Right ventricle myocardium inferior (tissue), 1 donor: ENCODE measurements at regions of chr21 and their contacts with region 1.

Region 1: DNA sequence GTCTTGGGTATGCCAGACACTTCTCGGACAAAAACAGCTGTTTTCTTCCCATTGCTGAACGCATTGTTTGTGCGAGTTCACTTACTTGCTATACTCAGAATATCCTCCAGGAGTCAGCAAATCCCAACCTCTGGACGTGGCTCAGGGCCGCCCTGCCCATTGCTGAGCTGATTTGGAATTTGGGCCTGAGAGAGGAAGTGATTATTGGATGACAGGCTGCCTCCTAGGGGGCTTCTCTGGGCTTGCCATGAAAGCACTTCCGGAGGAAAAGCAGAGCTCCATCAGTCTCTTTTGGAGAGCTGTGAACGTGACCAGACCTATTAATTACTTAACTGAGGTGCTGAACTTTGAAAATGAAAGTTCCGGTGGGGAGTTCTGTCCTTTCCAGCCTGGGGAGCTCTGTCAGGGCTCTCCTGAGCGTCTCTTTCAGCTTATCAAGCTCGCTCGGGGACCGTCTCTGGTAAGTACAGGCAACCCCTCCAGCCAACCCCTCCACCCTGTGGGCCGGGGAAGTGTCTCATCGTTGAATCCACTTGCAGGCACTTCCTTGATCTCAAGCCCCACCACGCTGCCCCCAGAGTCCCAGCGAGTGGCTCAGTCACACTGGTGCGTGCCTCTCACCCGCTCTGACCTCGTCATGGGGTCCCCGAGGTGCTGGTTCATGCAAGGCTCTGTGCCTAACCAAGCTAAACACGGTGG is 76.9 kb downstream of the CLIC6 start:
- DNase-seq: peak; percentile 88
- ATAC-seq: peak; percentile 93

Region 2: DNA sequence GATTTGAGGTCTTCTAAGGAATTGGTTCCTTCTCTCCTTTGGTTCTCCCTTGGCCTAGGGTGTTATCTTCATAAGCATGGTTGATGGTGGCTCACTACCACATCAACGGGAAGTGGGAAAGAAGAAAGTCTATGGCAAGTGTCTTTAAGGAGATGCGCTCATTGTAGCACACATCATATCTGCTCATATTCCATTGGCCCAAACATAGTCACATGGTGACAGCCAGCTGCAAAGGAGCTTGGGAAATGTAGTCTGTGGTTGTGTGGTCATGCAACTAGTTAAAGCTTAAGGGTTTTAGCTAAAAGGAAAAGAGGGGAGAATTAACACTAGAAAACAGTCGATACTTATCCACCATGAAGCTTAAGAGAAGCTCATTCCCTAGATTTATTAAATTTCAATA is 683.7 kb before region 1 on chr21:
- intact Hi-C with region 1: no loop called
- DNase-seq: no peak
- ATAC-seq: no peak

Region 3: GRCh38 chr21:35400233-35400957 is 654.7 kb after region 1 on chr21:
- intact Hi-C with region 1: loop called (anchors 5 kb)
- DNase-seq: no peak
- ATAC-seq: peak; percentile 65

Region 4: DNA sequence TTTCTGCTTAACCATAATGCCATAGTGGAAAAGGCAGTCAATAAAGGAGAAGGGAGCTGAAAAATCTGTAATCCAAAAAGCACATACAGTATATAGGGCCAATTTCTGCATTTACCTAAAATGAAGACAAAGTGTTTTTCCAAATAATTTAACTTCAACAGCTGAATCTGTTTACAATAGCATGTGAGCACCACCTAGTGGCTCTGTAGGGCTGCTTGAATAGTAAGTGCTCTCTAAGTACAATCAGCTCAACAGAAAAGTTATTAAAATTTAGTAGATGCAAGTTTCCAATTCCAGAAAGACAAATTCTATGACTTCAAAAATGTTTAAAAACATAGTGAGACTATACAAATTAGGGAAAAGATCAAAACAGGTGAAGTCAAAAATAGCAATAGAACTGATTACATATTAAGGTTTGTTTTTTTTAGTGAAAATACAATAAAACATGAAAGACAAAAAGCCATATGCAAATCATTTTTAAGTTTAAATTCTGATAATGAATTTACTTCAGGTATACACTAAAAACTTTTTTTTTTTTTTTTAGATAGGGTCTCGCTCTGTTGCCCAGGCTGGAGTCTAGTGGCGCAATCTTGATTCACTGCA is 1094.6 kb after region 1 on chr21:
- intact Hi-C with region 1: loop called (anchors 5 kb)
- DNase-seq: no peak
- ATAC-seq: no peak

Region 5: GRCh38 chr21:35940074-35940927 is 1194.6 kb after region 1 on chr21:
- intact Hi-C with region 1: loop called (anchors 2 kb)
- DNase-seq: no peak
- ATAC-seq: peak; percentile 96

Region 6: DNA sequence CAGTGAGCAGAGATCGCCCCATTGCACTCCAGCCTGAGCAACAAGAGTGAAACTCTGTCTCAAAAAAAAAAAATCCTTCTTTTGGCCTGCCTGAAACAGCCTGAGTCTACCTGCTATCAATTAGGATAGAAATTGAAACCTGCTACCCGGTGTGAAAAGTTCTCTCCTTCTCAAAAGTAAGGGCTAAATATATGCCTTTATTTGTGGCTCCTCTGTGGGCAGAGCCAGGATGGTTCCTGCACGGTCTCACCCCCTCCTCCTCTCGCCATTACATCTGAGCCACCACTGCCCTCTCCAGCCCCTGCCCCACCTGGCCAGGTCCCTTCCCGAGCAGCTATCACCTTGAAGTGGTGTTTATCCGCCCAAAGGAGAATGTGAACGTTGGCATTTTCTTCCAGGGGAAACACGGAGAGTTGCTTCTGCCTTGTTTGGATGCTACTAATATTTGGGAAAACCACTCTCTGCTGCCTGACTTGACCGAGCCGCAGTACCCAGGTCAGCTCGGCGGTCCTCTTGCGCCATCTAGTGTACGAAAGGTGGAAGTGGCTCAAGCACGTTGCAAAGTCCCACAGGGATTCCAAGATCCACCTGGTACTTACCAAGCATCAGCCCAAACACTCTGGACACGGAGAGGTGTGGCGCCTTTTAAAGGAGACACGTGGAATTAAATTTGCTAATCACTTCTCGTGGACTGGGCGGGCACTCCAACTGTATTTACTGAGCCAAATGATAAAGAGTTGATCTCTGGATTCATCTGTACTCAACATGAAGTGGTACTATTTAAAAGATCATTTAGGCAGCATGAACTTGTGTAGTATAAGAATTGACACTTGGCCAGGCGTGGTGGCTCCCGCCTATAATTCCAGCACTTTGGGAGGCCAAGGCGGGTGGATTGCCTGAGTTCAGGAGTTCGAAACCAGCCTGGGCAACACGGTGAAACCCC is 1282.7 kb after region 1 on chr21:
- intact Hi-C with region 1: loop called (anchors 1 kb)
- DNase-seq: peak; percentile 85
- ATAC-seq: peak; percentile 92